CD14-positive monocyte (primary cell): ENCODE measurements at regions of chr20 and their contacts with region 1.

Region 1: GRCh38 chr20:62302341-62303058 is at the start of gene ADRM1:
- DNase-seq: peak; percentile 95 to 96 (median 95)
- H3K4me3 ChIP-seq: peak within 1 kb of the TSS; percentile 72 to 96 (median 85)
- H3K4me3 Mint-ChIP-seq: peak within 1 kb of the TSS; percentile 90 to 95
- H3K27ac ChIP-seq: peak within 1 kb of the TSS; percentile 96 to 98
- H3K27ac Mint-ChIP-seq: peak within 1 kb of the TSS; percentile 93 to 99 (median 98)
- H3K4me1 ChIP-seq: peaks cover 17 to 18% of the 10 kb centered on the region in 2 donors
- H3K4me1 Mint-ChIP-seq: peaks cover 26% of the 10 kb centered on the region
- H3K27me3 ChIP-seq: no peaks in the 10 kb centered on the region
- H3K27me3 Mint-ChIP-seq: peaks cover 0 to 4% (median 3%) of the 10 kb centered on the region in 3 donors
- CTCF ChIP-seq: peak; percentile 80
- polyA plus RNA-seq, gene ADRM1: 63.3 to 81.5 (median 72.5) TPM

Region 2: DNA sequence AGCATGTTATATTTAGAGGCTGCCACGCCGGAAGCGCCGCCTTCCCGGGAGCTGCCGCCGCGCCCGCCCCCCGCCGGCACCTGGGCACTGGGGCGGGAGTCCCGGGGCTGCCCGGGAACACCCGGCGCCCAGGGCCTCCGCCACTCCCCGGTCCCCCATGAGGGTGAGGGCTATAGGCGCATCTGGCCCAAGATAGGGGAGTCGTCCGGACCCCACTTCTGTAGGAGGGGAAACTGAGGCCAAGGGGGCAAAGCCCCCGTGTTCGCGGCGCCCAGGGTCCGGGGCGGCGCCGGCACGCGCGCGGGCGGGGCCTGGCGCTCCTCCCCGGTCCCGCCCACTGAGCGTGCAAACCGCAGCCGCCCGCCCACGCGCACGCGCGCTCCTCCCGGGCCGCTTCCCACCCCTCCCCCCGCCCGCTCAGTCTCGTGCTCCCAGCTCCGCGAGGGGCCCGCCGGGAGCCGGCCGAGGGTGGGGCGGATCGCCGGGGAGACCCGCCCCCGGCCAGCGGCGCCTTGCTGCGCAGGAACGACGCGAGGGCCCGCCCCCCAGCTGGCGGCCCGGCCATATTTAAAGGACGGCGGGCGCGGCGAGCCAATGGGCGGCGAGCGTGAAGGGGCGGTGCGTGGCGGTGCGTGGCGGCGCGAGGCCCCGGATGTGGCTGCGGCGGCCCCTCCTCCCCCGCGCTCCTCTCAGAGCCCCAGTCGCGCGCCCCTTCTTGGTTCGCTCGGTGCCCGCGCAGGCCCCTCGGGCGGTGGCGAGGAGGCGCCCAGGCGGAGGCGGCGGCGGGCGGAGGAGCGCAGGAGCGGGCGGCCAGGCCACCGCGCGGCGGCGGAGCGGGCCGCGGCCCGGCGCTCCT is 180.5 kb before region 1 on chr20 and contains the start of gene LSM14B:
- intact Hi-C with region 1: loop called in 1 of 2 experiments (anchors 10 kb)
- DNase-seq: peak; percentile 94 to 97 (median 96)
- H3K4me3 ChIP-seq: peak within 1 kb of the TSS; percentile 52 to 87 (median 71)
- H3K4me3 Mint-ChIP-seq: peak within 1 kb of the TSS; percentile 85 to 93
- H3K27ac ChIP-seq: peak within 1 kb of the TSS; percentile 65 to 94
- H3K27ac Mint-ChIP-seq: peak within 1 kb of the TSS; percentile 88 to 95 (median 93)
- H3K4me1 ChIP-seq: peaks cover 17 to 27% of the 10 kb centered on the region in 2 donors
- H3K4me1 Mint-ChIP-seq: peaks cover 19% of the 10 kb centered on the region
- H3K27me3 ChIP-seq: peaks cover 0 to 5% of the 10 kb centered on the region in 2 donors
- H3K27me3 Mint-ChIP-seq: peaks cover 9 to 24% (median 18%) of the 10 kb centered on the region in 3 donors
- CTCF ChIP-seq: no peak
- polyA plus RNA-seq, gene LSM14B: 1.0 to 33.5 (median 1.4) TPM

Region 3: GRCh38 chr20:62237801-62238571 is 64.5 kb before region 1 on chr20 and contains the start of gene OSBPL2:
- intact Hi-C with region 1: loop called in 1 of 2 experiments (anchors 5 kb)
- DNase-seq: peak; percentile 97 to 99 (median 99)
- H3K4me3 ChIP-seq: peak within 1 kb of the TSS; percentile 64 to 82 (median 70)
- H3K4me3 Mint-ChIP-seq: peak within 1 kb of the TSS; percentile 82 to 93
- H3K27ac ChIP-seq: peak within 1 kb of the TSS; percentile 32 to 79
- H3K27ac Mint-ChIP-seq: peak within 1 kb of the TSS; percentile 71 to 93 (median 83)
- H3K4me1 ChIP-seq: peaks cover 28 to 38% of the 10 kb centered on the region in 2 donors
- H3K4me1 Mint-ChIP-seq: peaks cover 34% of the 10 kb centered on the region
- H3K27me3 ChIP-seq: no peaks in the 10 kb centered on the region
- H3K27me3 Mint-ChIP-seq: peaks cover 1 to 3% (median 2%) of the 10 kb centered on the region in 3 donors
- CTCF ChIP-seq: no peak
- polyA plus RNA-seq, gene OSBPL2: 12.9 to 29.1 (median 17.9) TPM

Region 4: DNA sequence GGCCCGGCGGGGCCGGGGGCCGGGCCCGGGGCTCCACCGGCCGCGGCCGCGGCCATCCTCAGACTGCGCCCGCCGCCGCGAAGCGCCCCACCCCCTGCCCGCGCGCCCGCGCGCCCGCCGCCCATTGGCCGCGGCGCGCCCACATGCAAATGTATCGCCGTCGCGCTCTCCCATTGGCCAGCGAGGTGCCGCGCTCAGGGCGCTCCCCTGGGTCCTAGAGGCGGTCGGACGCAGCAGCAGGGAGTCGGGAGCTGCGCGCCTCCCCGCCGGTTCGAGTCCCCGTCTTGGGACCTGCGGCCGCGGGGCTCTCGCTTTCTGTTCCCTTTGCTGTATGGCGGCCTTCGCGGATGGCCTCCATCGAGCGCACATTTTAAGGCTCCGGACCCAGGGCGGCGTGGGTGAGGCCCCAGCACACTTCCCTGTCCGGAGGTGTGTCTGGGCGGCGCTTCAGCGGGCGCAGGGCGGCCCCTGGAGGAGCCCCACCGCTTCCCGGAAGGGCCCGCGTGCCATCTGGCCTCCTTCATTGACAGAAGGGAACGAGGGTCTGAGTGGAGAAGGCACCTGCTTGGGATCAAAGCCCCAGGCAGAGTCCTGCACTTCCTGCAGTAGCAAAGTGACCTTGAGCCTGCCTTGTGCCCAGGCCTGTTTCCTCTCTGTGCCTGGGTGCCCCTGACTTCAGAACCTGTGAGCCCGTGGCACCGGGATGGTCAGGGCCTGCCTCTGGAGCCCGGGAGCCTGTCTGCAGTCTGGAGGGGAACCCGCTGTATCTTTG is 104.9 kb after region 1 on chr20 and contains the start of gene CABLES2:
- intact Hi-C with region 1: loop called in 1 of 2 experiments (anchors 2 kb)
- DNase-seq: peak; percentile 89 to 92 (median 90)
- H3K4me3 ChIP-seq: peak within 1 kb of the TSS; percentile 52 to 79 (median 54)
- H3K4me3 Mint-ChIP-seq: peak within 1 kb of the TSS; percentile 82 to 89
- H3K27ac ChIP-seq: peak within 1 kb of the TSS; percentile 6 to 74
- H3K27ac Mint-ChIP-seq: peak within 1 kb of the TSS in 6 of 7 donors; percentile 74 to 86 (median 81)
- H3K4me1 ChIP-seq: peaks cover 30 to 41% of the 10 kb centered on the region in 2 donors
- H3K4me1 Mint-ChIP-seq: peaks cover 34% of the 10 kb centered on the region
- H3K27me3 ChIP-seq: peaks cover 0 to 3% of the 10 kb centered on the region in 2 donors
- H3K27me3 Mint-ChIP-seq: peaks cover 12 to 17% (median 13%) of the 10 kb centered on the region in 3 donors
- CTCF ChIP-seq: no peak
- polyA plus RNA-seq, gene CABLES2: 0.60 to 4.0 (median 0.61) TPM

Region 5: DNA sequence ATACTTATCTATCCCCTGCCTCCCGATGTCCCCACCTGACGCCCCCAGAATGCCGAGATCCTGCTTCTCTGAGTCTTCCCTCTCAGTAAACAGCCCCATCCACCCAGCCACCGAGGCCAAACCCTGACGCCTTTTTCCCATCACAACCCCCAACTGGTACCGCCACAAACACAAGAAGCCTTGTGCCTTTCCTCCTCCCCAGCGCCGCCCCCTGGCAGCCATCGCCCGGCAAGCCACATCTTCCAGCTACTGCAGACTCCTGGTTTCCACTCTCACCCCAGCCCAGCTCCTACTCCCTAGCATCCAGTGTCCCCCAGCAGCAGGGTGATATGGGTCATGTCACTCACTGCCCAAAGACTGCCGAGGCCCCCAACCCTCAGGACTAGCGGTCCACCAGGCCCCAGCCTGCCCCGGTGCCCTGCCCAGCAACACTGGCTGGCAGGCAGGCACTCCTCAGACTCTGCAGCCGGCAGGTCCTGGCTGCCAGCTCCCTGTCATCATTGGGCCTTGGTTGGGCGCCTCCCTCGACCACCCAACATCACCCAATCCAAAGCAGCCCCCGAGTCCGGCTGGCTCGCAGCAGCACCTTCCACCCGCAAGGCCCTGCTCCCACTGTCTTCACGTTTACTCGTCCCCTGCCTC is 548.0 kb after region 1 on chr20:
- intact Hi-C with region 1: loop called in 1 of 2 experiments (anchors 10 kb)
- DNase-seq: no peak
- H3K4me3 ChIP-seq: no peak overlapping the region
- H3K4me3 Mint-ChIP-seq: peak overlapping the region in 1 of 2 donors; percentile 14
- H3K27ac ChIP-seq: no peak overlapping the region
- H3K27ac Mint-ChIP-seq: no peak overlapping the region
- H3K4me1 ChIP-seq: no peaks in the 10 kb centered on the region
- H3K4me1 Mint-ChIP-seq: peaks cover 3% of the 10 kb centered on the region
- H3K27me3 ChIP-seq: no peaks in the 10 kb centered on the region
- H3K27me3 Mint-ChIP-seq: peaks cover 0 to 2% (median 0%) of the 10 kb centered on the region in 3 donors
- CTCF ChIP-seq: no peak